ENCODE measurements at regions of chr3 and their contacts with region 1.

Region 1: GRCh38 chr3:149975919-149976318 is 5.2 kb upstream of the PFN2 start:
- DNase-seq: no peak
- H3K4me3 ChIP-seq: no peak overlapping the region
- H3K27ac ChIP-seq: no peak overlapping the region
- H3K4me1 ChIP-seq: peaks cover 0 to 2% (median 0%) of the 10 kb centered on the region in 4 experiments; a peak in 2 of 7 replicates
- H3K27me3 ChIP-seq: no peaks in the 10 kb centered on the region
- CTCF ChIP-seq: peak; percentile 3 to 73 (median 57)
- EP300 ChIP-seq: no peak
- POLR2A ChIP-seq: no peak
- RAD21 ChIP-seq: peak; percentile 55 to 57

Region 2: GRCh38 chr3:149990423-149990948 is 14.6 kb after region 1 on chr3:
- CTCF ChIA-PET with region 1: interaction called, 16 read pairs
- POLR2A ChIA-PET with region 1: interaction called, 30 read pairs
- DNase-seq: no peak
- H3K4me3 ChIP-seq: no peak overlapping the region
- H3K27ac ChIP-seq: no peak overlapping the region
- H3K4me1 ChIP-seq: peaks cover 0 to 9% (median 4%) of the 10 kb centered on the region in 4 experiments; a peak in 4 of 7 replicates
- H3K27me3 ChIP-seq: no peaks in the 10 kb centered on the region
- CTCF ChIP-seq: no peak
- EP300 ChIP-seq: no peak
- POLR2A ChIP-seq: no peak
- RAD21 ChIP-seq: no peak